Activated CD4-positive, alpha-beta T cell treated with anti-CD3 and anti-CD28 coated beads, Interleukin-2, amount 10 ng/mL, durations not matched to agents 24 days and 14 days (primary cell): ENCODE measurements at regions of chr16 and their contacts with region 1.

Region 1: GRCh38 chr16:19167710-19168370 is at the start of gene SYT17:
- DNase-seq: peak; percentile 83
- H3K4me3 Mint-ChIP-seq: peak within 1 kb of the TSS; percentile 53
- H3K27ac Mint-ChIP-seq: no peak within 1 kb of the TSS
- H3K4me1 Mint-ChIP-seq: peaks cover 2% of the 10 kb centered on the region
- H3K27me3 Mint-ChIP-seq: peaks cover 32% of the 10 kb centered on the region
- total RNA-seq, gene SYT17: 1.3 and 1.9 TPM in 2 replicates

Region 2: GRCh38 chr16:18983565-18984424 is 184.0 kb before region 1 on chr16 and contains the start of gene TMC7:
- intact Hi-C with region 1: no loop called
- DNase-seq: peak; percentile 63
- H3K4me3 Mint-ChIP-seq: peak within 1 kb of the TSS; percentile 41
- H3K27ac Mint-ChIP-seq: no peak within 1 kb of the TSS
- H3K4me1 Mint-ChIP-seq: peaks cover 2% of the 10 kb centered on the region
- H3K27me3 Mint-ChIP-seq: peaks cover 34% of the 10 kb centered on the region
- total RNA-seq, gene TMC7: not detected in 2 replicates

Region 3: GRCh38 chr16:19114352-19115052 is 53.3 kb before region 1 on chr16:
- intact Hi-C with region 1: loop called (anchors 5 kb)
- DNase-seq: peak; percentile 73
- H3K4me3 Mint-ChIP-seq: peak overlapping the region; percentile 87
- H3K27ac Mint-ChIP-seq: peak overlapping the region; percentile 87
- H3K4me1 Mint-ChIP-seq: peaks cover 35% of the 10 kb centered on the region
- H3K27me3 Mint-ChIP-seq: peaks cover 9% of the 10 kb centered on the region

Region 4: DNA sequence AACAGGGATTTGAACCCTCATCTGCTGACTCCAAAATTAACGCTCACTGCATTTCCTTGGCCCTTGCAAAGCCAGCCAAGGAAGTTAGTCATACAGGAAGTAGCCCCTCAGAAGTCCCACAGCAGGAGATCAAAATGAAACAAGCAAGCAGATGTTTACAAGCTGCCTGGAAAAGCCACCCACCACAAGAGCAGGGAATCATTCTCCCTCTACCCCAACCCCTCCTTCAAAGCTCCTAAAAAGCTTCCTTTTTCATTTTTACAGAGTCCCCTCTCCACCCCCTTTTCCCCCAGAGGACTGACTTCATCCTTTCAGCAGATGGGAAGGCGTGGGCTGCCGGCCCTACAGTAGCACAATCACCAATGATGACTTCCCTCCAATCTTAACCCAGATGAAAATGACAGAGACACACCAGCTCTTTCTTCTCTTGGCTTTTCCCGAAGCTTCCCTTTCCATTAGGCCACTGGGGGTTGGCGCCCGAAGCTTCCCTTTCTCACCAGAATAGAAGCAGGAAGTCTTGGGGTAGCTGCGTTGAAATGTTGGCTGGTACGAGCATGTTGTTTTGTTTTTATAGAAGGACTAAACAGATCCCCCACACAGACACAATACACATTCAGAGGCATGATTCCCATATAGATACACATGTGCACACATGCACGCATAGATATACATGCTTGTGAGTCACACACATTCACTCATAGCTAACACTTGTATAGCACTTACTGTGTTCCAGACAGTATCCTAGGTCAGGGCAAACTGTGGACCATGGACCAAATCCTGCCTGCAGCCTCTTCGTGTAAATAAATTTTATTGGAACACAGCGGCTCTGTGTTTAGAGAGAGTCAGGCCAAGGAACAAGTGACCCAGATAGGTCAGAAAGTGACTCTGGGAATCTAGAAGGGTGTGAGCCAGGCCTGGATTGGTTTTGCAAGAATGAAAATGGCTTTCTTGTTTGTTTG is 36.7 kb before region 1 on chr16:
- intact Hi-C with region 1: loop called (anchors 5 kb)
- DNase-seq: peak; percentile 59
- H3K4me3 Mint-ChIP-seq: peak overlapping the region; percentile 59
- H3K27ac Mint-ChIP-seq: peak overlapping the region; percentile 82
- H3K4me1 Mint-ChIP-seq: peaks cover 53% of the 10 kb centered on the region
- H3K27me3 Mint-ChIP-seq: no peaks in the 10 kb centered on the region

Region 5: GRCh38 chr16:19274165-19274797 is 106.4 kb after region 1 on chr16:
- intact Hi-C with region 1: no loop called
- DNase-seq: no peak
- H3K4me3 Mint-ChIP-seq: no peak overlapping the region
- H3K27ac Mint-ChIP-seq: no peak overlapping the region
- H3K4me1 Mint-ChIP-seq: no peaks in the 10 kb centered on the region
- H3K27me3 Mint-ChIP-seq: peaks cover 6% of the 10 kb centered on the region

Region 6: GRCh38 chr16:19375561-19376158 is 207.8 kb after region 1 on chr16:
- intact Hi-C with region 1: loop called (anchors 1 kb)
- DNase-seq: peak; percentile 77
- H3K4me3 Mint-ChIP-seq: no peak overlapping the region
- H3K27ac Mint-ChIP-seq: no peak overlapping the region
- H3K4me1 Mint-ChIP-seq: peaks cover 11% of the 10 kb centered on the region
- H3K27me3 Mint-ChIP-seq: no peaks in the 10 kb centered on the region